ENCODE measurements at regions of chr18 and their contacts with region 1.

Region 1: DNA sequence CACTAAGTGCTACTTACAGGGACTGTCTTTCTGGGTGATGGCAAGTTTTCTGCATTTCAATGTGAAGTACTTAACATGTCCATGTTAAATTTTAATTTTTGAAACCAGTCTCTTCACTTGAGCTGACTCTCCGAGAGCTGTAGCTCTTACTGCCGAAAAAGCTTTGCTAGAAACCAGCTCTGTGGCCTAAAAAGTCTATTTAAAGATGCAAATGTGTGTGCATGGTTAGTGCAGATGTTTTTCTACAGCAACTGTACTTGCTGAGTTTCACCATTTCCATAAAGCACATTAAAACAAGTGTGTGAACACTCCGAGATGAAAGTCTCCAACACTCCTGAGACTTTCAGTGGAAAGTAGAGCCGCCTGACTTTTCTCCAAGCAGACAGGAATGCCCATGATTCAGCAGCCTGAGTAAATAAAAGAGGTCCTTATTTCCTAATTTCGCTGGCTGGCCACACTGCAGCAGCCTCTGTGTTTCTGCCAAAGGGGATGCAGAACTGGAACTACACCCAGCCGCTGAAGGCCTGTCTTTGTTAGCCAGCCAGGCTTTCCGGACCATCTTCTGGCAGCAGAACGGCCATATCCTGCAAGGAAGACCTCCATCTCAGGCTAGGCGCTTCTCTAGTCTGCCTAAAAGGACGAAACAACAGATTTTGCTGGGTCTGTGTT is 121.2 kb downstream of the ZNF521 start:
- DNase-seq: peak; percentile 47 to 90 (median 78)
- H3K4me3 ChIP-seq: peak overlapping the region in 54 of 59 donors; percentile 1 to 57 (median 34)
- H3K27ac ChIP-seq: peak overlapping the region in 58 of 59 donors; percentile 11 to 87 (median 69)
- H3K27me3 ChIP-seq: no peaks in the 10 kb centered on the region
- CTCF ChIP-seq: peak in 10 of 56 donors; percentile 5 to 46 (median 24)

Region 2: GRCh38 chr18:24885276-24885675 is 345.5 kb before region 1 on chr18:
- intact Hi-C with region 1: loop called in 1 of 2 experiments (anchors 10 kb)
- DNase-seq: no peak
- H3K4me3 ChIP-seq: no peak overlapping the region
- H3K27ac ChIP-seq: no peak overlapping the region
- H3K27me3 ChIP-seq: no peaks in the 10 kb centered on the region
- CTCF ChIP-seq: no peak

Region 3: DNA sequence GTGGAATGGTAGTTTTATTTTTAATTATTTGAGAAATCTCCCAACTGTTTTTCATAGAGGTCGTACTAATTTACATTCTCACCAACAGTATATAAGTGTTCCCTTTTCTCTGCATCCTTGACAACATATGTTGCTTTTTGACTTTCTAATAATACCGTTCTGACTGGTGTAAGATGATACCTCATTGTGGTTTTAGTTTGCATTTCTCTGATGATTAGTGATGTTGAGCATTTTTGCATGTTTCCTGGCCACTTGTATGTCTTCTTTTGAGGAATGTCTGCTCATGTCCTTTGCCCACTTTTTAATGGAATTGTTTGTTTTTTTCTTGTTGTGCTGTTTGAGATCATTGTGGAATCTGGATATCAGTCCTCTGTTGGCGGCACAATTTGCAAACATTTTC is 121.3 kb before region 1 on chr18:
- intact Hi-C with region 1: no loop called
- DNase-seq: no peak
- H3K4me3 ChIP-seq: no peak overlapping the region
- H3K27ac ChIP-seq: no peak overlapping the region
- H3K27me3 ChIP-seq: peaks cover 0 to under 1% (median 0%) of the 10 kb centered on the region in 45 donors
- CTCF ChIP-seq: no peak

Region 4: DNA sequence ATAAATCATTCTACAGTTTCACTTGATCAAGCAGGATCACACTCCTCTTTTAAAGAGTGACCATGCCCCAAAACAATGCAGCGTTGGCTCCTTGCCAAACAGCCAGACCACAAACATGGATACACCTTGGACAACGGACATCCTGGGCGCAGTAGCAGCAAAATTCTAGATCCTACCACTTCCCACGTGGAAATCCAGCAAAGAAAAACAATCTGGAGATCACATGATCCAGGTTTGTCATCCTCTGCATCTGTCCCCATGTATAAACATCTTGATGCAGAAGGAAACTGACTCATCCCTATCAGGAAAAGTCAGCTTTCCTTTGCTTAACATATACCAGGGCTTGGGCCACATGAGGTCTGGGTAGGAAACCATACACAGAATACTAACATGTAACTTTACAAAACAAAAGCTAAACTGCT is 68.1 kb after region 1 on chr18:
- intact Hi-C with region 1: loop called in 1 of 2 experiments (anchors 10 kb)
- DNase-seq: peak in 1 of 10 donors; percentile 29
- H3K4me3 ChIP-seq: no peak overlapping the region
- H3K27ac ChIP-seq: no peak overlapping the region
- H3K27me3 ChIP-seq: no peaks in the 10 kb centered on the region
- CTCF ChIP-seq: no peak

Region 5: GRCh38 chr18:25351777-25352628 is 121.2 kb after region 1 on chr18 and contains the start of gene ZNF521:
- intact Hi-C with region 1: loop called (anchors 2 to 5 kb)
- DNase-seq: peak; percentile 72 to 90 (median 85)
- H3K4me3 ChIP-seq: peak within 1 kb of the TSS; percentile 54 to 89 (median 73)
- H3K27ac ChIP-seq: peak within 1 kb of the TSS; percentile 23 to 98 (median 91)
- H3K27me3 ChIP-seq: peaks cover 0 to 6% (median 0%) of the 10 kb centered on the region in 45 donors
- CTCF ChIP-seq: peak in 24 of 56 donors; percentile 11 to 40 (median 22)
- total RNA-seq, gene ZNF521: 12.9 to 41.3 (median 22.3) TPM

Region 6: DNA sequence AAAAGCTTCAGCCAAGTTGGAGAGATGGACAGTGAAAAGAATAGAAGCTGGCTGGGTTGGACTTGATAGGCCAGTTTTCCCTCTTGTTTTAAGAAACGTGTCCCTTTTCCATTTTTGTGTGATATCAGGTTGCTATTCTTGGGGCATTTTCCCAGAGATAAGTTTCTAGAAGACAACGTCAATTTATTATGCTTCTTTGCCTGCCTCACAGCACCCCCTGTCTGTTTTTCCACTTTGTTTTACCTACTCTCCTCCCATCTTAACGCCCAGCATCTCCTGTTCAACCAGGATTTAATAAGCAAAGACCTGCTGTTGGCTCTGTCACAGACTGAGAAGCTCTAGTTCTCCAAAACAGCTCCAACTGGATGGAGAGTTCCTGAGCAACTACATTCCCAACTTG is 438.9 kb after region 1 on chr18:
- intact Hi-C with region 1: no loop called
- DNase-seq: no peak
- H3K4me3 ChIP-seq: no peak overlapping the region
- H3K27ac ChIP-seq: no peak overlapping the region
- H3K27me3 ChIP-seq: peaks cover 0 to 6% (median 0%) of the 10 kb centered on the region in 45 donors
- CTCF ChIP-seq: peak in 3 of 56 donors; percentile 8 to 25 (median 16)